ENCODE measurements at regions of chr6 and their contacts with region 1.

Region 1: GRCh38 chr6:47631269-47631772 is 67.1 kb upstream of the ADGRF4 start:
- DNase-seq: peak; percentile 59
- H3K4me3 Mint-ChIP-seq: no peak overlapping the region
- H3K27ac Mint-ChIP-seq: no peak overlapping the region
- H3K4me1 Mint-ChIP-seq: no peaks in the 10 kb centered on the region
- H3K27me3 Mint-ChIP-seq: no peaks in the 10 kb centered on the region
- CTCF ChIP-seq: peak; percentile 58

Region 2: GRCh38 chr6:47413752-47414422 is 217.4 kb before region 1 on chr6:
- CTCF ChIA-PET with region 1: interaction called, 33 read pairs
- POLR2A ChIA-PET with region 1: interaction called, 3 read pairs
- intact Hi-C with region 1: loop called (anchors 1 kb)
- DNase-seq: peak; percentile 81
- H3K4me3 Mint-ChIP-seq: peak overlapping the region; percentile 68
- H3K27ac Mint-ChIP-seq: peak overlapping the region; percentile 94
- H3K4me1 Mint-ChIP-seq: peaks cover 18% of the 10 kb centered on the region
- H3K27me3 Mint-ChIP-seq: no peaks in the 10 kb centered on the region
- CTCF ChIP-seq: peak; percentile 75

Region 3: GRCh38 chr6:47701352-47701751 is 70.0 kb after region 1 on chr6:
- CTCF ChIA-PET with region 1: interaction called, 13 read pairs
- POLR2A ChIA-PET with region 1: interaction called, 5 read pairs
- intact Hi-C with region 1: no loop called
- DNase-seq: peak; percentile 84
- H3K4me3 Mint-ChIP-seq: peak overlapping the region; percentile 12
- H3K27ac Mint-ChIP-seq: peak overlapping the region; percentile 95
- H3K4me1 Mint-ChIP-seq: peaks cover 36% of the 10 kb centered on the region
- H3K27me3 Mint-ChIP-seq: no peaks in the 10 kb centered on the region
- CTCF ChIP-seq: no peak

Region 4: GRCh38 chr6:47741807-47742206 is 110.5 kb after region 1 on chr6:
- CTCF ChIA-PET with region 1: interaction called, 21 read pairs
- POLR2A ChIA-PET with region 1: no interaction called
- intact Hi-C with region 1: no loop called
- DNase-seq: peak; percentile 89
- H3K4me3 Mint-ChIP-seq: no peak overlapping the region
- H3K27ac Mint-ChIP-seq: peak overlapping the region; percentile 2
- H3K4me1 Mint-ChIP-seq: peaks cover 12% of the 10 kb centered on the region
- H3K27me3 Mint-ChIP-seq: no peaks in the 10 kb centered on the region
- CTCF ChIP-seq: no peak

Measured in MCF 10A (cell line).